Activated CD4-positive, alpha-beta T cell treated with anti-CD3 and anti-CD28 coated beads, Interleukin-2, amount 10 ng/mL, durations not matched to agents 24 days and 14 days (primary cell): ENCODE measurements at regions of chr5 and their contacts with region 1.

Region 1: GRCh38 chr5:142699184-142699720 is 13.4 kb upstream of the FGF1 start:
- DNase-seq: peak; percentile 93
- H3K4me3 Mint-ChIP-seq: no peak overlapping the region
- H3K27ac Mint-ChIP-seq: no peak overlapping the region
- H3K4me1 Mint-ChIP-seq: peaks cover 2% of the 10 kb centered on the region
- H3K27me3 Mint-ChIP-seq: peaks cover 13% of the 10 kb centered on the region

Region 2: DNA sequence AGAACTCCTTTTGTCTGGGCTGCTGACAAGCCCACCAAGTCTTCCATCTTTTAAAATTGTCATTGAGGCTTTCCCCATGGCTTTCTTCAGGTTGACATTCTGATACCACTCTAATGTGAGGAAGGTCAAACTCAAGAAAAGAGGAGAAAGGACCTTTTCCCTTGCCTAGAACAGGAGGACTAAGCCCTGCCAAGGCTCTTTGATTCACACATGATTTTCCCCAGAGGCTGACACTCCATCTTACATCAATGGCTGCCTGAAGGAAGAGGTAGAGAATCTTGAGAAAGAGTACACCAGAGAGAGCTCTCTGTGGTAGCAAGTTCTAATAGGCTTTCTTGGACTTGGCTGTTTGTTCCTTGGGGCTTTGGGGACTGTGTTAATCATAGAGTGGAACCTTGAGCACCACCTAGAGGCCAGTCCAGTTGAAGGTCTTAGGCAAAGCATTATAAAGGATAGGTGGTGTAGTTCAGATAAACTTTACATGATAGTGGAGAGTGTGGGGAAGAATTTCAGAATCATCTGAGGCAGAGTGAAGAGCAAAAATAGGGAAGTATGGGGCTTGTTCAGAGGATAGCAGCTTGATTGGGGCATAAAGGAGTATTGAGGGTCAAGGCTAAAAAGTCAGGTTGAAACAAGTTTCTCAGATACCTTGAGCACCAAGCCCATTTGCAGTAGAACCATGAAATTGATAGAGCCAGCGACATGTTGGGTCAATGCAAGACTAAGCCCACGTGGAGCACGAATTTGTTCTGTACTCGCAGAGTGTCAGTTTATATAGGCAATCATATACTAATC is 553.9 kb before region 1 on chr5:
- intact Hi-C with region 1: loop called (anchors 2 kb)
- DNase-seq: peak; percentile 89
- H3K4me3 Mint-ChIP-seq: no peak overlapping the region
- H3K27ac Mint-ChIP-seq: no peak overlapping the region
- H3K4me1 Mint-ChIP-seq: no peaks in the 10 kb centered on the region
- H3K27me3 Mint-ChIP-seq: no peaks in the 10 kb centered on the region

Region 3: GRCh38 chr5:142568283-142568995 is 130.8 kb before region 1 on chr5:
- intact Hi-C with region 1: no loop called
- DNase-seq: no peak
- H3K4me3 Mint-ChIP-seq: no peak overlapping the region
- H3K27ac Mint-ChIP-seq: no peak overlapping the region
- H3K4me1 Mint-ChIP-seq: no peaks in the 10 kb centered on the region
- H3K27me3 Mint-ChIP-seq: no peaks in the 10 kb centered on the region

Region 4: GRCh38 chr5:142611154-142611553 is 88.1 kb before region 1 on chr5:
- intact Hi-C with region 1: loop called (anchors 1 kb)
- DNase-seq: peak; percentile 90
- H3K4me3 Mint-ChIP-seq: no peak overlapping the region
- H3K27ac Mint-ChIP-seq: no peak overlapping the region
- H3K4me1 Mint-ChIP-seq: peaks cover 2% of the 10 kb centered on the region
- H3K27me3 Mint-ChIP-seq: peaks cover 30% of the 10 kb centered on the region

Region 5: DNA sequence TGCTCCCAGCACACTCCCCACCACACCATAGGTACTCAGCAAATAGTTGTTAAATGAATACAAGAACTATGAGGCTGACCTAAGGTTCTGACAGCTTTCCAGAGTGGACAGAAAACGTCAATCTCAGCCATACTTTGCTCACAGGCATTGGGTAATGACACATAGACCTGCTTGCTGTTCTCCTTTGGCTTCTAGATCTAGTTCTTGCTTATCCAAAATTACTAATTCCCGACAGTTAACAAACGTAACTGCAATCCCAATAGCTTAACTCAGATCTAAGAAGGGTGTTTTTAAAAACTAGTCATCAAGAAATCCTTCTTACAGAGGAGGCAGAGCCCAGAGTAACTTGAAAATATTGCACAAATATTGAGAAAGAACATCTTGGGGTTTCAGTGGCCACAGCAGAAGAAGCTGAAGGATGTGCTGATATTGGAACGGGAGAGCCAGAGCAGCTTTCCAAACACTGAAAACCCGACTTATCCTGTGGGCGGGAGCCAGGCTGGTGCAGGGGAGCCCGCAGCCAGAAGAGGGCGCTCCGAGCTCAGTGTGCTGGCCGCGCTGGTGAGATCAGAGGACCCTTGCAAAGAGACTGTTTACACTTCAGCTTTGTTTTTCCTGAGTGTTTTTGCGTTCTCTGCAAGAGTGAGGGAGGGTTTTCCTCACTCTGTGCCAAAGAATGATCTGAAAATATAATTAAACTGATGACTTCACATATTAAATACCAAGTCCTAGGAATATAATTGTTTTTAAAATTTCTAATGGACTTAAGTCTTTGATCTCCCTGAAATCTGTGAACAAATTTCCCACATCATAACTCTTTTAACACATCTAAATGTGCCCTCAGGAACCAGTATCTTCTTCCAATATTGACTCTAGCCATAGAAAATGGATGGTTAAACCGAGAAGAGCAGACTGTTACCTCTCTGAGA is 43.6 kb before region 1 on chr5:
- intact Hi-C with region 1: loop called (anchors 1 kb)
- DNase-seq: peak; percentile 90
- H3K4me3 Mint-ChIP-seq: no peak overlapping the region
- H3K27ac Mint-ChIP-seq: no peak overlapping the region
- H3K4me1 Mint-ChIP-seq: no peaks in the 10 kb centered on the region
- H3K27me3 Mint-ChIP-seq: peaks cover 25% of the 10 kb centered on the region

Region 6: GRCh38 chr5:143142596-143143435 is 443.6 kb after region 1 on chr5:
- intact Hi-C with region 1: no loop called
- DNase-seq: no peak
- H3K4me3 Mint-ChIP-seq: no peak overlapping the region
- H3K27ac Mint-ChIP-seq: no peak overlapping the region
- H3K4me1 Mint-ChIP-seq: peaks cover 12% of the 10 kb centered on the region
- H3K27me3 Mint-ChIP-seq: no peaks in the 10 kb centered on the region